Naive thymus-derived CD8-positive, alpha-beta T cell (primary cell): ENCODE measurements at regions of chr19 and their contacts with region 1.

Region 1: GRCh38 chr19:29665215-29665825 is at the start of gene PLEKHF1:
- DNase-seq: peak; percentile 57 to 88 (median 80)
- ATAC-seq: peak; percentile 67 to 74
- H3K4me3 Mint-ChIP-seq: peak within 1 kb of the TSS; percentile 87 to 94 (median 92)
- H3K27ac Mint-ChIP-seq: peak within 1 kb of the TSS; percentile 89 to 99 (median 96)
- H3K4me1 Mint-ChIP-seq: peaks cover 27 to 74% (median 66%) of the 10 kb centered on the region in 4 donors
- H3K27me3 Mint-ChIP-seq: no peaks in the 10 kb centered on the region
- polyA plus RNA-seq, gene PLEKHF1: 3.8 to 19.7 (median 15.5) TPM

Region 2: GRCh38 chr19:29680447-29680846 is 15.1 kb after region 1 on chr19:
- POLR2A ChIA-PET with region 1: interaction called, 154 read pairs
- DNase-seq: peak; percentile 55 to 86 (median 74)
- ATAC-seq: peak; percentile 89 to 96
- H3K4me3 Mint-ChIP-seq: peak overlapping the region; percentile 50 to 87 (median 74)
- H3K27ac Mint-ChIP-seq: peak overlapping the region in 9 of 10 donors; percentile 81 to 93 (median 89)
- H3K4me1 Mint-ChIP-seq: peaks cover 34 to 87% (median 74%) of the 10 kb centered on the region in 4 donors
- H3K27me3 Mint-ChIP-seq: no peaks in the 10 kb centered on the region

Region 3: GRCh38 chr19:29694669-29695627 is 29.6 kb after region 1 on chr19:
- POLR2A ChIA-PET with region 1: interaction called, 26 read pairs
- DNase-seq: peak; percentile 67 to 88 (median 82)
- ATAC-seq: peak; percentile 99
- H3K4me3 Mint-ChIP-seq: peak overlapping the region in 1 of 10 donors; percentile 24
- H3K27ac Mint-ChIP-seq: peak overlapping the region in 9 of 10 donors; percentile 4 to 92 (median 83)
- H3K4me1 Mint-ChIP-seq: peaks cover 19 to 40% (median 29%) of the 10 kb centered on the region in 4 donors
- H3K27me3 Mint-ChIP-seq: no peaks in the 10 kb centered on the region